Activated B cell treated with CpG ODN at 0.5 μM for 24 hours (primary cell): ENCODE measurements at regions of chr6 and their contacts with region 1.

Region 1: DNA sequence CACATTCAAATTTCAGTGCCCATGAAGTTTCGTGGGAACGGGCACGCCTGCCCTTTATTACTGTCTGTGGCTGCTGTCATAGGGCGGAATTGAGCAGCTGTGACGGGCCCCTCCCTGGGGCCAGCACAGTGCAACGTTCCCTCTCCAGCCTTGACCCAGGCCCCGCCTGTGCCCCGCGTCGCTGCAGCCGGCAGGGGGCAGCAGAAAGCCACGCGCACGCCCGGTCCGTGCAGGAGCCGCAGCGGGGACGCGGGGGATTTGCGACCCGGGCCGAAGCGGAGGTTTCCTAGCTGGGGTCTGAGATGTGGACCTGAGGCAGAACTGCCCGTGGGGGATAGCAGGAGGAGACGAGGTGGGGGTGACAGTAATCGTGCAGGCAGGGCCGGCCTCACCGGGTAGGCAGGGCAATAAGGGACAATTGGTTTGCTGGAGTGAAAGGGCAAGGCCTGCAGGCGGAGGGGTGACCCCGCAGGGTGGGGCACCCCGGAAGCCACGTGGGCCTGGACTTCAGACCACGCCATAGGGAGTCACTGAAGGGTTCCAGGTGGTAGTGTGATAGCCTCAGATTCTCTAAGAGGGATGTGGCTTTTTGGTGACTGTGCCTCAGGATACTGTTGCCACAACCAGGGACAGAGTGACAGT is 54.4 kb downstream of the SYTL3 start:
- DNase-seq: peak; percentile 89
- ATAC-seq: peak; percentile 95
- H3K4me3 Mint-ChIP-seq: peak overlapping the region; percentile 86
- H3K27ac Mint-ChIP-seq: peak overlapping the region; percentile 81
- H3K4me1 Mint-ChIP-seq: peaks cover 29% of the 10 kb centered on the region
- H3K27me3 Mint-ChIP-seq: no peaks in the 10 kb centered on the region
- CTCF ChIP-seq: peak; percentile 92

Region 2: DNA sequence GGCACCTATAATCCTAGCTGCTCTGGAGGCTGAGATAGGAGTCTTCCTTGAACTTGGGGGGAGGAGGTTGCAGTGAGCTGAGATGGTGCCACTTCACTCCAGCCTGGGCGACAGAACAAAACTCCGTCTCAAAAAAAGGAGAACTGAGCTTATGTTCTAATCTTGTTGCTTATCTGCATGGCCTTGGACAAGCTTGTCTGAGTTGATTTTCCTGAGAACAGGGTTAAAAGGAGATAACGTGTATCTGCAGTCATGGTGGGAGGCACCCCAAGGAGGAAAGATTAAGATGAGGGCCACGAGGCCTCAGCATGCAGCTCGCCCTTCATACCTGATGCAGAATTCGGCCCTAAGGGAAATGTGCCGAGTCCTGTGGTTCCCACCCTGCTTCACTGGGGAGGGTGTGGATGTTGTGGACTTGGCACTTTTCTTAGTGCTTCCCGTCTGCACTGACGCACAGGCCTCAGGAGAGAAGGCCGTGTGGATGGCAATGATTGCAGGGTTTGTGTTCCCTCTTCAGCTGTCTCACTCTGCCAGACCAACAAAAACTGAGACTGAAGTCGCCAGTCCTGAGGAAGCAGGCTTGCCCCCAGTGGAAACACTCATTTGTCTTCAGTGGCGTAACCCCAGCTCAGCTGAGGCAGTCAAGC is 58.6 kb after region 1 on chr6:
- CTCF ChIA-PET with region 1: no interaction called
- POLR2A ChIA-PET with region 1: interaction called, 4 read pairs
- intact Hi-C with region 1: loop called (anchors 2 kb)
- DNase-seq: no peak
- ATAC-seq: no peak
- H3K4me3 Mint-ChIP-seq: no peak overlapping the region
- H3K27ac Mint-ChIP-seq: peak overlapping the region; percentile 24
- H3K4me1 Mint-ChIP-seq: no peaks in the 10 kb centered on the region
- H3K27me3 Mint-ChIP-seq: no peaks in the 10 kb centered on the region
- CTCF ChIP-seq: no peak

Region 3: DNA sequence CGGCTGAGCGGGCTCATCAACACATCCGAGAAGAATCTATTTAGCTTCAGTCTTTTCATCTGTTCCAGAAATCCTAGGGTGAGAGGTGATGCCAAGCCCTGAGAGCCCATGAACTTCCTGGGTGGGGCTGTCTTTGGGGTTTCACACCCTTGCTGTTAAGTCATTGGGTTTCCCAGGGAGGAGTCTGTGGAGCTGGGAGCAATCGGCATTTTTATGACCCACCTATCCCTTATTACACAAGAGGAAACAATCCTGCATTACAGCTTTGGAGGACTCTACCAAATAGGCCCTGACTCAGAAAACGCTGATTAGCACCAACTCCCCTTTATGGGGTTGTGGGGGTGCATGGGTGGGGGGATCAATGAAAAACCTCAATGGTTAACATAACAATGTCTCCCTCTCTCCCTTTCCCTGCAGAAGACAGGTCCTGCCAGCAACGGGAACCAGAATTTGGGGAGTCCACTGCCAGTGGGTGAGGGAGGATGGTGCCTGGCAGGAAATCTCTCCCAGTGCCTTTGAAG is 68.6 kb after region 1 on chr6:
- CTCF ChIA-PET with region 1: interaction called, 4 read pairs
- POLR2A ChIA-PET with region 1: interaction called, 9 read pairs
- intact Hi-C with region 1: loop called (anchors 2 kb)
- DNase-seq: no peak
- ATAC-seq: no peak
- H3K4me3 Mint-ChIP-seq: no peak overlapping the region
- H3K27ac Mint-ChIP-seq: no peak overlapping the region
- H3K4me1 Mint-ChIP-seq: no peaks in the 10 kb centered on the region
- H3K27me3 Mint-ChIP-seq: no peaks in the 10 kb centered on the region
- CTCF ChIP-seq: no peak

Region 4: DNA sequence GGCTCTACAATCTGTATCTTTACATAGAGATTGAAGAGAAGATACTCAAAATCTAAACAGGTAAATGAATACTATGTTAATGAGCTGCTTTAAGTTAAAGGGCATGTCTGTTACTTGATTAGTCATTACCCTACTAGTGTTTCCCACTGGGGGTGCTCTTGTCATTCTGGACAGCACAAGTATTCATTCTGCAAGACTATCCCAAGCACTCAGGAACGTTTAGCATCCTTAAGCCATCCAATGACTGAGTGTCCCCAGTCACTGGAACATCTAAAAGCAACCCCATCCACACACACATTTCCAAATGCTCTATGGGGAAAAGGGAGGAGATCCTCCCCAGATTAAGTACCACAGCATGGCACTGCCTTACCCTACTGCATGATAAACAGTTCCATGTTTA is 89.1 kb after region 1 on chr6:
- CTCF ChIA-PET with region 1: interaction called, 11 read pairs
- POLR2A ChIA-PET with region 1: interaction called, 4 read pairs
- intact Hi-C with region 1: loop called (anchors 1 kb)
- DNase-seq: no peak
- ATAC-seq: peak; percentile 54
- H3K4me3 Mint-ChIP-seq: peak overlapping the region; percentile 44
- H3K27ac Mint-ChIP-seq: peak overlapping the region; percentile 70
- H3K4me1 Mint-ChIP-seq: peaks cover 95% of the 10 kb centered on the region
- H3K27me3 Mint-ChIP-seq: no peaks in the 10 kb centered on the region
- CTCF ChIP-seq: no peak

Region 5: DNA sequence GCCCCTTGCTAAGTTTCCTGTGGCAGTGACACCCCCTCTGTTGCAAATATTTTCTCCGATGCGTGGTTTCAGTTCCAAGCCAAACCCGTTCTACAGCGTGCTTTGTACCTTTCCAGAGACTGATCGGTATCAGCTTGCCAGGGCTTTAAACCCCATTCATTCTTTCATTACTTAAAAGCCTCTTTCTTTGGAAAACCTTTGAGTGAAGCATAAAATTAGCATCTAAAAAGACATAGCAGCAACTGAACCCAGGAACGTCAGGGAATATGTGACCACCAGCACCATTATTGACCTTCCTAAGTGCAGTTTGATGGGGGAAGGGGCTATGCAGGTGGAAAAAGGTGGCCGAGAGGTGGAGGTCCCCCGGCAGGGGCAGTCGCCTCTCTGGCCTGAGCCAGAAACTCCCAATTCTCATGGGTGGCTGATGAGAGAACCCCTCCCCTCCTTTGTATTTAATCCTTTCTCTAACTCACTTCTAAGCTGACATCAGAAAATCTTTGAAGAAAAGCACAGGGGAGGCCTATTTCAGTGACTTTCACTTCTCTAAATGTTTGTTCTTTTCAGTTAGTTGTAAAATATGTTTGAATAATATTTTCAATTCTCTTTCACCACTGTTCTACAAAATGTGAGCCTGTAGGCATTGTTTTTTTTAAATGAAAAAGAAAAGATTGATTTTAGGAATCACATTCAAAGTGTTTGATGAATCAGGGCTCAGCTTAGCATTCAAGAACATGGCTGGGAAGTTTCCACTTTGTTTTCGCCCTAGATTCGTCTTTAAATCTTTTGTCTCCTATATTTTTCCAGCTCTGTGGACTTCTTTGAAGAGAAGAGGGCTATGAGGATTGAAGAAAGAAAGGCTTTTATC is 206.4 kb after region 1 on chr6:
- CTCF ChIA-PET with region 1: interaction called, 5 read pairs
- POLR2A ChIA-PET with region 1: interaction called, 4 read pairs
- intact Hi-C with region 1: loop called (anchors 2 kb)
- DNase-seq: peak; percentile 36
- ATAC-seq: peak; percentile 76
- H3K4me3 Mint-ChIP-seq: peak overlapping the region; percentile 80
- H3K27ac Mint-ChIP-seq: peak overlapping the region; percentile 96
- H3K4me1 Mint-ChIP-seq: peaks cover 58% of the 10 kb centered on the region
- H3K27me3 Mint-ChIP-seq: no peaks in the 10 kb centered on the region
- CTCF ChIP-seq: no peak

Region 6: GRCh38 chr6:158958504-158959386 is 254.4 kb after region 1 on chr6:
- CTCF ChIA-PET with region 1: interaction called, 8 read pairs
- POLR2A ChIA-PET with region 1: interaction called, 7 read pairs
- intact Hi-C with region 1: loop called (anchors 1 kb)
- DNase-seq: peak; percentile 20
- ATAC-seq: peak; percentile 87
- H3K4me3 Mint-ChIP-seq: no peak overlapping the region
- H3K27ac Mint-ChIP-seq: no peak overlapping the region
- H3K4me1 Mint-ChIP-seq: peaks cover 34% of the 10 kb centered on the region
- H3K27me3 Mint-ChIP-seq: no peaks in the 10 kb centered on the region
- CTCF ChIP-seq: no peak